ENCODE measurements at regions of chr1 and their contacts with region 1.

Region 1: GRCh38 chr1:3618881-3619671 is 5.7 kb upstream of the TPRG1L start:
- DNase-seq: peak; percentile 84
- H3K4me3 ChIP-seq: no peak overlapping the region
- H3K27ac ChIP-seq: no peak overlapping the region
- H3K4me1 ChIP-seq: peaks cover 0 to 32% (median 21%) of the 10 kb centered on the region in 4 donors
- H3K27me3 ChIP-seq: no peaks in the 10 kb centered on the region
- CTCF ChIP-seq: peak; percentile 63 to 87 (median 75)
- EP300 ChIP-seq: no peak
- POLR2A ChIP-seq: no peak

Region 2: DNA sequence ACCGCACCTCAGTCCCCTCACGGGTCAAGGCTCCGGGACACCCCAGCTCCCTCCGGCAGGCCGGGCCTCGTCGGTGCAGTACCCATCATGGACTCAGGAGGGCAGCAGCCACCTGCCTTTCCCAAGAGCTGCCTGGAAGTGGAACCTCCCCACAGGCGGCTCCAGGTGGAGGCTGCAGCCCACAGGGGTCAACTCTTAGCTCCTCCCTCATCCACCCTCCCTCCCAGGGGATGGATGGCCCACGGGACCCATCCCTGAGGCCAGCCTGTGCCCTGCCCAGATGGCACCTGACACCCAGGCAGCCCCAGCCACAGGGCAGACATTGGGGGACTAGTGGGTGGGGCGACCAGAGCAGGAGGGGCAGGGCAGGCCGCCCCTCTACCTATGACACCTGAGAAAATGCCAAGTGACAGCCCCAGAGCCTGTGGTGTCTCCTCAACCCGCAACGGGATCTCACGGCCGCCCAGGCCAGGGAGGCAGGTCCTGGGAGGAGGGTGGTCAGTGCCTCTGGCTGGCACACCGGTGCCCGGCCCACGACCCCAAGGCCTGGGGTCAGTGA is 165.8 kb before region 1 on chr1:
- intact Hi-C with region 1: loop called (anchors 2 kb)
- DNase-seq: peak; percentile 78
- H3K4me3 ChIP-seq: no peak overlapping the region
- H3K27ac ChIP-seq: no peak overlapping the region
- H3K4me1 ChIP-seq: peaks cover 0 to 21% (median 16%) of the 10 kb centered on the region in 4 donors
- H3K27me3 ChIP-seq: peaks cover 26 to 81% (median 46%) of the 10 kb centered on the region in 3 donors
- CTCF ChIP-seq: peak; percentile 34 to 88 (median 84)
- EP300 ChIP-seq: no peak
- POLR2A ChIP-seq: no peak

Region 3: GRCh38 chr1:3491291-3492246 is 127.5 kb before region 1 on chr1:
- intact Hi-C with region 1: loop called (anchors 1 kb)
- DNase-seq: peak; percentile 84
- H3K4me3 ChIP-seq: peak overlapping the region in 1 of 4 donors; percentile 14
- H3K27ac ChIP-seq: no peak overlapping the region
- H3K4me1 ChIP-seq: peaks cover 0 to 9% (median 7%) of the 10 kb centered on the region in 4 donors
- H3K27me3 ChIP-seq: peaks cover 0 to 9% (median 0%) of the 10 kb centered on the region in 3 donors
- CTCF ChIP-seq: peak; percentile 89 to 100 (median 96)
- EP300 ChIP-seq: no peak
- POLR2A ChIP-seq: no peak

Region 4: GRCh38 chr1:3564921-3565827 is 53.9 kb before region 1 on chr1:
- intact Hi-C with region 1: loop called (anchors 2 kb)
- DNase-seq: no peak
- H3K4me3 ChIP-seq: no peak overlapping the region
- H3K27ac ChIP-seq: no peak overlapping the region
- H3K4me1 ChIP-seq: peaks cover 0 to 9% (median 3%) of the 10 kb centered on the region in 4 donors
- H3K27me3 ChIP-seq: no peaks in the 10 kb centered on the region
- CTCF ChIP-seq: peak; percentile 26 to 78 (median 66)
- EP300 ChIP-seq: no peak
- POLR2A ChIP-seq: no peak

Region 5: DNA sequence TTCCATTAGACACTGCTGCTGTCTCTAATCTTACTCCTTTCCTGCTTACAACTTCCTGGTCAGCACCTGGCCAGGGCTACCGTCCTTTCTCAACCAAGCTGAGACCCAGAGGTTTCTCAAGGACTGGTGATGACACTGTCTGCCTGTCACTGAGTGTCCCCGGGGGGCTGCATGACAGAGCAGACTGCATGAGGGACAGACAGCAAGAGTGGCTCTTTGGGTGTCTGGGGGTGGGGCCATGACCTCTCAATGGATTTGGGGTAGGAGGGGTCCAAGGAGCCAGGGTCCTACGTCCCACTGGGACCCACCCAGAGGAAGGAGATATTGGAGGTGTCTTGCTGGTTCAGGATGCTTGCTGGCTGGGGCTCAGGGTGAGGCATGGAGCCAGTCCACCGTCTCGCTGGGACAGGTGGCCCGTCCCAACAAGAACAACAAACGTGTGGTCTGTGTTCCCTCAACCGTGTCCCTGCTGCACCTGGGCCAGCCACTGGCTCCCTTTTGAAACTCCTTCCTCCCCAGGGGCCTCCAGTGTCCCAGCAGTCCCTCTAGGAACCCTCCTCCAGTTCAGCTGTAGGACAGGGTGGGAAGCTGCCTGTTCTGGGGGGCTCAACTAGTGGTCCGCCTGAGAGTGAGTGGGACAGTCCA is 690.7 kb after region 1 on chr1:
- intact Hi-C with region 1: no loop called
- DNase-seq: no peak
- H3K4me3 ChIP-seq: no peak overlapping the region
- H3K27ac ChIP-seq: no peak overlapping the region
- H3K4me1 ChIP-seq: no peaks in the 10 kb centered on the region
- H3K27me3 ChIP-seq: no peaks in the 10 kb centered on the region
- CTCF ChIP-seq: no peak
- EP300 ChIP-seq: no peak
- POLR2A ChIP-seq: no peak

Measured in sigmoid colon (tissue), 7 donors.